Naive thymus-derived CD4-positive, alpha-beta T cell (primary cell): ENCODE measurements at regions of chr10 and their contacts with region 1.

Region 1: DNA sequence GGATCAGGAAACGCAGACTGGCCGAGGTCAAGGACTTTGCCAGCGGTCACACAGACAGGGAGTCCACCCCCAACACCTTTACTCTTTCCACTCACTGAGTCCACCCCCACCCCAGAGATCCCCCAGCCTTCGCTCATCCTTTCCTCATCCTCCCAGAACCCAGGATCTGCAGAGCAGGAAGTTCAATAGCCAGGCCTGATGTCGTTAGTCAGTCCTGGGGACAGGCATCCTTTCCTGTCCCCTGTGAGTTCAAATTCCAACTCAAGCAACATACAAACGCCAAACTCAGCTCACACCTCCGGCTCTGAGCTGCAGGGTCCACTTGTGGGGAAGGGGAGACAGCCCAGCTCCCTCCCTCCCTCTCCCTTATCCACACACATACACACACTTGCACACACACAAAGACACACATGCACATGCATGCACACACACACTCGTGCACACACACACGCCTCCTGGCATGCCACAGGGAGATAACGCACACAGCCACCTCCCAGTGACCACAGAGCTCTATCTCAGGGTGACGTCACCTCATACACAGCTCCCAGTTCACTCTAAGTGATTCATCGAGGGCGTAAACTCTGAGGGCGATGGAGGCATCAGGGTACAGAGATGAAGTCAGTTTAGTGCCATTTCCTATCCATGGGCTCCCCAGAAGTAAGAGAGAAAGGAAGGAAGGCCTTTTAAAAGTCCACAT is 23.9 kb downstream of the CALML3 start:
- DNase-seq: peak in 8 of 9 donors; percentile 43 to 72 (median 52)
- ATAC-seq: peak; percentile 94
- H3K4me3 ChIP-seq: no peak overlapping the region
- H3K4me3 Mint-ChIP-seq: no peak overlapping the region
- H3K27ac ChIP-seq: no peak overlapping the region
- H3K27ac Mint-ChIP-seq: no peak overlapping the region
- H3K4me1 ChIP-seq: peaks cover 0 to 43% of the 10 kb centered on the region in 2 donors
- H3K4me1 Mint-ChIP-seq: peaks cover 0 to 41% (median 26%) of the 10 kb centered on the region in 7 donors
- H3K27me3 ChIP-seq: no peaks in the 10 kb centered on the region
- H3K27me3 Mint-ChIP-seq: peaks cover 0 to 11% (median 0%) of the 10 kb centered on the region in 5 donors

Region 2: DNA sequence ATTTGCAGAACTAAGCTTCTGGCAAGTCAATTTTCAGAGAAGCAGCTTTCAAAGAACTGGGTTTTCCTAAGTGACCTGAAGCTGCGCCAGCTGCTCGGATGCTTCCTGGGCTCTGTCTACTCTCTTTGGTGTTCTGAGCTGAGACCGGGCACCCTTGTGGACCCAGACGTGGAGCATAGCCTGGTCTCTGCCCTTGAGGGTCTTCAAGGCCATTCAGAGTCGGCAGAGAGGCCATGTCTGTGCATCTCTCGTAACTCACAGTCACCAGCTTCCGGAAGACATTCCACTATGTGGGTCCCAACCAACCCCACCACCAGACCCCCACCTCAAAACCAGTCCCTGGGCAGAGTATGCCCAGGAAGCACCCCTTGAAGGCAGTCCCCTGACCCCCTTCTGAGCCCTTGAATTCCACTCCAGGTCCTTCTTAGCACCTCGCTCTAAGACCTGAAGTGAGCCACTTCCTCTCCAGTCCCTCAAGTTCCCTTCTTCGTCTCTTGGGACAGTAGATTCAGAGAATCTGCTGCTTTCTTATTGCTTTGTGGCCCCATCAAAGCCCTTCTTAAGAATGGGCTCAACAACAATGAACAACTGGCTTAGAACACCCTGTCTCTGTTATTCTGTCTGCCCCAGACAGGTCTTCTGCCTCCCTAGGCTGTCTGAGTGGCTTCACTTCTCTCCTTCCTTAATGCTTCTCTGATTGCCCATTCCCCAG is 57.8 kb before region 1 on chr10:
- CTCF ChIA-PET with region 1: no interaction called
- POLR2A ChIA-PET with region 1: no interaction called
- intact Hi-C with region 1: no loop called
- DNase-seq: no peak
- ATAC-seq: no peak
- H3K4me3 ChIP-seq: no peak overlapping the region
- H3K4me3 Mint-ChIP-seq: no peak overlapping the region
- H3K27ac ChIP-seq: no peak overlapping the region
- H3K27ac Mint-ChIP-seq: peak overlapping the region in 1 of 9 donors; percentile 28
- H3K4me1 ChIP-seq: no peaks in the 10 kb centered on the region
- H3K4me1 Mint-ChIP-seq: peaks cover 0 to 8% (median 0%) of the 10 kb centered on the region in 7 donors
- H3K27me3 ChIP-seq: no peaks in the 10 kb centered on the region
- H3K27me3 Mint-ChIP-seq: peaks cover 0 to 4% (median 0%) of the 10 kb centered on the region in 5 donors

Region 3: GRCh38 chr10:5563991-5564536 is 15.4 kb after region 1 on chr10:
- CTCF ChIA-PET with region 1: no interaction called
- POLR2A ChIA-PET with region 1: interaction called, 35 read pairs
- intact Hi-C with region 1: loop called in 1 of 2 experiments (anchors 1 kb)
- DNase-seq: peak; percentile 34 to 67 (median 64)
- ATAC-seq: peak; percentile 87
- H3K4me3 ChIP-seq: peak overlapping the region; percentile 34
- H3K4me3 Mint-ChIP-seq: peak overlapping the region; percentile 78 to 95 (median 86)
- H3K27ac ChIP-seq: peak overlapping the region; percentile 83
- H3K27ac Mint-ChIP-seq: peak overlapping the region; percentile 97 to 100 (median 99)
- H3K4me1 ChIP-seq: peaks cover 3 to 31% of the 10 kb centered on the region in 2 donors
- H3K4me1 Mint-ChIP-seq: peaks cover 21 to 56% (median 43%) of the 10 kb centered on the region in 7 donors
- H3K27me3 ChIP-seq: no peaks in the 10 kb centered on the region
- H3K27me3 Mint-ChIP-seq: peaks cover 0 to 6% (median 0%) of the 10 kb centered on the region in 5 donors

Region 4: DNA sequence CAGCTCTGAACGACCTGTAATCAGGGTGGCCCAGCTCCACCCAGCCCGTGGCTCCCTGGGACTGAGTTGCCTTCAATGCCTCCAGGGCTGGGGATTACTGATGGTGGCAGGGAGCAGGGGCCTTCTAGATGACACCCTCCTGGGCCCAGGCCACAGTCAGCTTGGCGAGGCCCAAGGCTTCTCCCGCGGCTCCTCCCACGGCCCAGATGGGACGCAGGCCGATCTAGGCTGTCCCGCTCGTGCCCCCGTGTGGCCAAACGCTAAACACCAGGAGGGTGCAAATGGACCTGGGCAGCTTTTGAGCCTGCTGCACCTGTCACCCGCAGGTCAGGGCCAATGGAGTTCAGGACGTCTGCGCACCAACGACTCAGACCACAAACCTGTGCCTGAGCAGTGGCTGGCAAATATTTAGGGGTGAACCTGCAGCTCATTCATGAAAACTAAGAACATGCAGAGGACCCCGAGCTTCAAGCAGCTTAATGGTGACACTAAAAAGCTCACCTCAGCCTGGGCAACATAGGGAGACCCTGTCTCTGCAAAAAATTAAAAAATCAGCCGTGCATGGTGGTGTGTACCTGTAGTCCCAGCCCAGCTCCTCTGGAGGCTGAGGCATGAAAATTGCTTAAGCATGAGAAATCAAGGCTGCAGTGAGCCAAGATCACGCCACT is 74.5 kb after region 1 on chr10:
- CTCF ChIA-PET with region 1: interaction called, 6 read pairs
- POLR2A ChIA-PET with region 1: no interaction called
- intact Hi-C with region 1: loop called in 1 of 2 experiments (anchors 2 kb)
- DNase-seq: peak; percentile 62 to 82 (median 70)
- ATAC-seq: peak; percentile 96
- H3K4me3 ChIP-seq: no peak overlapping the region
- H3K4me3 Mint-ChIP-seq: peak overlapping the region in 1 of 10 donors; percentile 32
- H3K27ac ChIP-seq: no peak overlapping the region
- H3K27ac Mint-ChIP-seq: peak overlapping the region in 1 of 9 donors; percentile 41
- H3K4me1 ChIP-seq: no peaks in the 10 kb centered on the region
- H3K4me1 Mint-ChIP-seq: peaks cover 0 to 4% (median 0%) of the 10 kb centered on the region in 7 donors
- H3K27me3 ChIP-seq: no peaks in the 10 kb centered on the region
- H3K27me3 Mint-ChIP-seq: peaks cover 0 to 4% (median 0%) of the 10 kb centered on the region in 5 donors